ENCODE measurements at regions of chr2 and their contacts with region 1.

Region 1: GRCh38 chr2:28997237-28997846 is 16.2 kb downstream of the TOGARAM2 start:
- DNase-seq: no peak
- H3K4me3 ChIP-seq: no peak overlapping the region
- H3K27ac ChIP-seq: no peak overlapping the region
- H3K4me1 ChIP-seq: peaks cover 8% of the 10 kb centered on the region
- H3K27me3 ChIP-seq: no peaks in the 10 kb centered on the region
- CTCF ChIP-seq: no peak

Region 2: GRCh38 chr2:28904802-28905499 is 92.4 kb before region 1 on chr2:
- CTCF ChIA-PET with region 1: no interaction called
- dilution Hi-C with region 1: no loop called
- in situ Hi-C with region 1: no loop called
- intact Hi-C with region 1: no loop called
- DNase-seq: no peak
- H3K4me3 ChIP-seq: no peak overlapping the region
- H3K27ac ChIP-seq: no peak overlapping the region
- H3K4me1 ChIP-seq: peaks cover 6% of the 10 kb centered on the region
- H3K27me3 ChIP-seq: no peaks in the 10 kb centered on the region
- CTCF ChIP-seq: no peak

Region 3: DNA sequence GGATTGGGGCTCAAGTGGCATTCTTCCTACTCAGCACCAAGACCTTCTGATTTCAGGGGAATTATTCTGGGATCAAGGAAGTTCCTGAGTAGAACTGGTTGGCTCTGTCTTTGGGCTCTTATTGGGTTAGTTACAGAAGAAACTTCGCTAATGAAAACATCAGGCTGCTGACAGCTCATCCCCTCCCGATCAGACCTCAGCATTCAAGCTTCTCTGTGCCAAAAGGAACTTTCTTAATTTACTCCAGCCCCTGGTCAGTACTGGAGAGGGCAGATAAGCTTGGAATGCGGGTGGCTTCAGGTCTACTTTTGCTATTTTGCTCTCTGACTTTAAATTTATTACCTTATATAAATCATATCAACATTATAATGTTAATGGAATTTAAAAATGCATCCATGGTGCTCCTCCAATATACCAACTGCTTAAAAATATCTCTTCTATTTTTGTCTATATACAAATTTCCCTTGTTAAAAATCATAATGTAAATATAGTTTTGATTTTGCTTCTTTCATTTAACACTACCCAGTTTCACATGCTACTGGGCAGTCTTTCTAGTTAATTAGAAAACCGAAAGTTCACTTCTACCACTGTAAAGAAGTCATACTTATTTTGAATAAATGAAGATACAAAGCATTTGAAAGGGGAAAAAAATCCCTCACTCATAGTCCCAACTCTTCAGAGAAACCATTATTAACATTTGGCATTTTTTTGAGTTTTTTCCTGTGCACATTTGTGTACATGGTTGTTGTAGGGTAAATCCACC is 42.6 kb after region 1 on chr2:
- CTCF ChIA-PET with region 1: no interaction called
- dilution Hi-C with region 1: loop called (anchors 5 kb)
- in situ Hi-C with region 1: no loop called
- intact Hi-C with region 1: no loop called
- DNase-seq: no peak
- H3K4me3 ChIP-seq: no peak overlapping the region
- H3K27ac ChIP-seq: no peak overlapping the region
- H3K4me1 ChIP-seq: no peaks in the 10 kb centered on the region
- H3K27me3 ChIP-seq: no peaks in the 10 kb centered on the region
- CTCF ChIP-seq: no peak

Region 4: GRCh38 chr2:29227935-29228627 is 230.7 kb after region 1 on chr2:
- CTCF ChIA-PET with region 1: no interaction called
- dilution Hi-C with region 1: no loop called
- in situ Hi-C with region 1: no loop called
- intact Hi-C with region 1: no loop called
- DNase-seq: no peak
- H3K4me3 ChIP-seq: no peak overlapping the region
- H3K27ac ChIP-seq: no peak overlapping the region
- H3K4me1 ChIP-seq: peaks cover 18% of the 10 kb centered on the region
- H3K27me3 ChIP-seq: no peaks in the 10 kb centered on the region
- CTCF ChIP-seq: no peak

Measured in mammary epithelial cell (primary cell).